WTC11 (cell line): ENCODE measurements at regions of chr20 and their contacts with region 1.

Region 1: DNA sequence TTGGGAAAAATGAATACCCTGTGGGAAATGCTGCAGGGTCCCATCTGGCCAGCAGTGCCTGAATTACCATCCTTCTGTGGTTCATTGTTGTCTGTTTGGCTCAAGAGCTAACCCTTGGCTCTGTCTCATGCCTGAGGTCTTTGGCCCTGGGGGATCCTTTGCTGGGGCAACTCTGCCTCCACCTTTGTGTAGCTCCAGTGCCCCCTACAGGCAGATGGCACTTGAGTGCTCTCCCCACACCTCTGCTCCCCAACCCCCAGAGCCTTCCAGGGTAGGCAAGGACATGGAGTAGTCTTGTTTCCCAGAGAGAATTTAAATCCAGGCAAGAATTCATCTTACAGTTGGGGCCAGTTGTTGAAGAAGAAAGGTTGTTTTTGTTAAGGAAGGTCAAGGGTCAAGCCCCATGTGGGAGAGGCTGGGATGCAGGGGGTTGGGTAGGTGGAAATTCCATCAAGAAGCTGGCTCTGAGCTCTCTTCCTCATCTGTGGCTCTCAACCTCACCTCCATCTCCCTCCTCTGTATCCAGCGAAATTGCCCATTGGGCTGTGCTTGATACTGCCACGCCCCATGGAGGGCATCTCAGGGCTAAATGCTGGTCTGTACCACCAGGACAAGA is 44.2 kb downstream of the ZNF831 start:
- DNase-seq: peak; percentile 86
- ATAC-seq: peak; percentile 98
- H3K4me3 Mint-ChIP-seq: no peak overlapping the region
- H3K27ac Mint-ChIP-seq: peak overlapping the region; percentile 60; the same call in 1 of the 2 replicates
- H3K4me1 Mint-ChIP-seq: peaks cover 29% of the 10 kb centered on the region
- H3K27me3 Mint-ChIP-seq: peaks cover 20% of the 10 kb centered on the region
- CTCF ChIP-seq: peak; percentile 56; the same call in 1 of the 2 replicates

Region 2: GRCh38 chr20:58870239-58871014 is 337.4 kb before region 1 on chr20:
- CTCF ChIA-PET with region 1: interaction called, 10 read pairs
- POLR2A ChIA-PET with region 1: no interaction called
- DNase-seq: peak; percentile 83
- ATAC-seq: peak; percentile 91
- H3K4me3 Mint-ChIP-seq: no peak overlapping the region
- H3K27ac Mint-ChIP-seq: no peak overlapping the region
- H3K4me1 Mint-ChIP-seq: peaks cover 32% of the 10 kb centered on the region
- H3K27me3 Mint-ChIP-seq: no peaks in the 10 kb centered on the region
- CTCF ChIP-seq: peak; percentile 76

Region 3: DNA sequence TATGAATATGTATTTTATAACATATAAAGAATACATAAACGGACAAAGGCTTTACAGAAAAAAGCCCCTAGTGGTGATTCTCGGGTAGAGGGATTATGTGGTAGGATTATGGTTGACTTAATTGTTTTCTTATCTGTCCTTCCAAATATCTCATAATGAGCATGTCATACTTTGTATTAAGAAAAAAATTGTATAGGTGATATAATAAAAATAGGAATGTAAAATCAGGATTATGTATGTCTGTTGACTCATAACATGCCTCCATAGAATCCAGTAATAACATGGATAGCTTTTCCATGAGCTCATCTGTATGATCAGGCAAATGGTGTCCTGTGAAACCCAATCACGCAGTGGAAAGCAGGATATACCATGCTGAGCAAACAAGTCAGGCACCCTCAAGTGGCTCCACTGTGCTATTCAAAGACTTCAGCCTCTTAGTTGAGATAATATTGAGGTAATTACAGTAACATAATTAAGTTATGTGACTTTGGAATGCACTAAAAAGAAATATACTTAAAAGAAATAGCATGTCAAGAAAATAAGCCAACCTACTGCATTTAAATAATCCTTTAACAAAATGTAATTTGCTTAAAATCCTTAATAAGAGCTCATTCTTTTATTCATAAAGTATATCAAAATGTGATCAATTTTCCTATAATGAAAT is 125.6 kb before region 1 on chr20:
- CTCF ChIA-PET with region 1: interaction called, 36 read pairs
- POLR2A ChIA-PET with region 1: no interaction called
- DNase-seq: no peak
- ATAC-seq: peak; percentile 30; the same call in 1 of the 2 replicates
- H3K4me3 Mint-ChIP-seq: no peak overlapping the region
- H3K27ac Mint-ChIP-seq: no peak overlapping the region
- H3K4me1 Mint-ChIP-seq: no peaks in the 10 kb centered on the region
- H3K27me3 Mint-ChIP-seq: peaks cover 4% of the 10 kb centered on the region
- CTCF ChIP-seq: no peak

Region 4: DNA sequence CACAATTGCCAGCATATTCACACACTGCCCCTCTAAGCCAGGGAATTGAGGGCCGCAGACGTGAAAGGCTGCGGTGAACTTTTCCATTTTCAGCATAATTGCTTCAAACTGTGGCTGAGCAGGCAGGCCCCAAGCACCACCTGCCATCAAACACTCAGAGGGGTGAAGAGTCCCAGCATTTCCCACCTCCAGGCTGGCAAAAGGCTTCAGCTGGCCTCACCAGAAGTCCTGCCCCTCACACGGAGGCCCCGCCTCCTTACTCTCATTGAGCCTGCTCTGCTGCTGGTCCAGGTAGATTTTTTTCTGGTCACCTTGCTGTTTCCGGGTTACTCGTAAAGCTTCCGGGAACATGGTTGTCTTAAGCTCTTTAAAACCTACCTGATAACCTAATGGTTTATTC is 113.3 kb before region 1 on chr20:
- CTCF ChIA-PET with region 1: interaction called, 18 read pairs
- POLR2A ChIA-PET with region 1: no interaction called
- DNase-seq: peak; percentile 44
- ATAC-seq: peak; percentile 97
- H3K4me3 Mint-ChIP-seq: no peak overlapping the region
- H3K27ac Mint-ChIP-seq: no peak overlapping the region
- H3K4me1 Mint-ChIP-seq: peaks cover 6% of the 10 kb centered on the region; the same call in 1 of the 2 replicates
- H3K27me3 Mint-ChIP-seq: peaks cover 3% of the 10 kb centered on the region
- CTCF ChIP-seq: no peak

Region 5: DNA sequence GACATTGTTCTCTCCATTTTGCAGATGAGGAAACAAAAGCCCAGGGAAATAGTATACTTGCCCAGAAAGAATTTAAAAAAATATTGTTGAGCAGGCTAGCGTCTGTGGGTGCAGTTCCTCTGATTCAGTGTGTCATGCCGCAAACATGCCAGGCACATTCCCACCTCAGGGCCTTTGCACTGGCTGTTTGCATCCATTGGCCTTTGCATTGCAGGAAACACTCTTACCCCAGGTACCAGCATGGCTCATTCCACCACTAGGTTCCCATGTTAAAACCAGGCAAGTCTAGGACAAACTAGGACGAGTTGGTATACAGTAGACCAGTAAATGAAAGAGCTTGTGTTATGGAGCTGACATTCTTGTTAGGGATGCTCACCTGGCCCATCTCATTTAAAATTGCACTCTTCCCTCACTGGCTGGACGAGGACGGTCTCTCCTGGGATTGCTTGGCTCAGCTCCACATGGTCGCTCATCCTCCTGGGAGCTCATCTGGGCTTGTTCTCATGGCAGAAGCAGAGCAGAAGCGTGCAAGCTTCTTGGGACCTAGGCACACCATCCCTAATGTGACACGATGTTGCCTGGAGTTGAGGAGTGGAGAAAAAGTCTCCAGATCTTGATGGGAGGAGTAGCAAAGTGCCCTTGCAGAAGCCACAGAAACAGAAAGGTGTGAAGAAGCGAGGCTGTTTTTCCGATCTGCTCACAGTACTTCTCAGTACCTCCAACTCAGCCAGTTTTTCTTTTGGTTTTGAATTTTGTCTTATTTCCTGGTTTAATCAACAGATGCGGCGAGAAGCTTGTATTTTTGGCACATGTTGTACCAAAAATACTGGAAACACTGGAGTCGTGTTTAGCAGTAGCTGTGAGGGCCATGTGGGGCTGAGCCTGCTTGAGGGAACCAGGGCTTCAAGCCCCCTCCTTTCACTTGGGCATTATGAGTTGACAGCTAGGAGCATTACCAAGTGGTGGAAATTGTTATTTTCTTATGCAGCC is 30.3 kb before region 1 on chr20:
- CTCF ChIA-PET with region 1: interaction called, 13 read pairs
- POLR2A ChIA-PET with region 1: no interaction called
- DNase-seq: no peak
- ATAC-seq: no peak
- H3K4me3 Mint-ChIP-seq: no peak overlapping the region
- H3K27ac Mint-ChIP-seq: no peak overlapping the region
- H3K4me1 Mint-ChIP-seq: no peaks in the 10 kb centered on the region
- H3K27me3 Mint-ChIP-seq: peaks cover 2% of the 10 kb centered on the region
- CTCF ChIP-seq: no peak

Region 6: GRCh38 chr20:59222253-59223181 is 14.7 kb after region 1 on chr20:
- CTCF ChIA-PET with region 1: interaction called, 68 read pairs
- POLR2A ChIA-PET with region 1: no interaction called
- DNase-seq: peak; percentile 93
- ATAC-seq: peak; percentile 88
- H3K4me3 Mint-ChIP-seq: peak overlapping the region; percentile 80
- H3K27ac Mint-ChIP-seq: no peak overlapping the region
- H3K4me1 Mint-ChIP-seq: peaks cover 38% of the 10 kb centered on the region
- H3K27me3 Mint-ChIP-seq: peaks cover 55% of the 10 kb centered on the region
- CTCF ChIP-seq: peak; percentile 86

Region 7: GRCh38 chr20:59455402-59456341 is 247.8 kb after region 1 on chr20:
- CTCF ChIA-PET with region 1: interaction called, 12 read pairs
- POLR2A ChIA-PET with region 1: no interaction called
- DNase-seq: no peak
- ATAC-seq: peak; percentile 57
- H3K4me3 Mint-ChIP-seq: no peak overlapping the region
- H3K27ac Mint-ChIP-seq: no peak overlapping the region
- H3K4me1 Mint-ChIP-seq: peaks cover 12% of the 10 kb centered on the region; the same call in 1 of the 2 replicates
- H3K27me3 Mint-ChIP-seq: peaks cover 7% of the 10 kb centered on the region
- CTCF ChIP-seq: peak; percentile 45; the same call in 1 of the 2 replicates